Activated T-helper 2 cell treated with anti-CD3 and anti-CD28 coated beads, Interferon-gamma antibody, Interleukin-2, Interleukin-4, amounts not matched to agents 10 μg/mL and 5 μg/mL and 100 μg/mL, durations not matched to agents 14 hours and 24 hours and 36 hours (primary cell): ENCODE measurements at regions of chr2 and their contacts with region 1.

Region 1: DNA sequence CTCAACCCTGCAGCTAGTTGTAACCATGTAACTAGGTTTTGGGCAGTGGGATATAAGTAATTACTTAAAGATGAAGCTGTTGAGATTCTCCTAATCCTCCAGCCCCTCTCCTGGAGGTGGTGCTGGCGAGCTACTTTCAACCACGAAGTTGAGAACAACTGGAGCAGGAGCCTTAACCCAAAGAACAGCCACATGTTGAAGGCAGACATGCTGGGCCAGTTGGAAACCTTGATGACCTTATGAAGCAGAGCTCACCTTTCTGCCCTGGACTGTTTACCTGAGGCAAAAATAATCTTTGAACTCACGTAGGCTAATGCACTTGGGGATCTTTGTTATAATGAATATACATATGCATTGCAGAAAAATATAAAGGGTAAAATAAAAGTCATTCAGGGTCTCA is 89.6 kb upstream of the NPAS2 start:
- DNase-seq: no peak
- H3K4me3 Mint-ChIP-seq: no peak overlapping the region
- H3K27ac Mint-ChIP-seq: no peak overlapping the region
- H3K4me1 Mint-ChIP-seq: no peaks in the 10 kb centered on the region
- H3K27me3 Mint-ChIP-seq: peaks cover 19% of the 10 kb centered on the region

Region 2: DNA sequence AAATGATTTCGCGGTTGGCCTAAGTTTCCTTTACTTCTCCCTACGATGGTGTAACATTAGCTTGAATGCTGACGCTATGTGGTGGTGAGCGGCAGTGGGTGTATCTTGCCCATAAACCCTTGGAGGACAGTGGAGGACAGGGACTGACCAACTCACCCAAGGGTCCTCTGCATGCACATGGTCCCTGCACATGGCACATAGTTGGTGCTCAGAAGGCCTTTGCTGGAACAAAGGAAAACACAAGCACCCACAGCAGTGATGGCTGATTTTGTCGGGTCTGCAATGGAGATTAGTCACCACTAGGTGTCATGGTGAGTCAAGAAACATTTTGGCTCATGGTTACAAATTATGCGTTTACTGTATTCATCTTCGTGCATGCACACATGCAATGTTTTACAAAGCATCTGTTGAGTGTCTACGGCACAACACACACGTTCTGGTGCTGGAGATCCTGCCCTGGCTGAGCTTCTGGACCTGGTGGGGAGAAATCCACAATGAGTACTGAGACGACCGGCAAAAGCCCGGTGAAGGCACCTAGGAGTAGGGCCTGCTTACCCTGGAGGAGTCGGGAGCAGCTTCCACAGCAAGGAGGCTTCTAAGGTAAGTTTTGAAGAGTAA is 123.5 kb before region 1 on chr2:
- intact Hi-C with region 1: loop called (anchors 10 kb)
- DNase-seq: peak; percentile 21
- H3K4me3 Mint-ChIP-seq: no peak overlapping the region
- H3K27ac Mint-ChIP-seq: no peak overlapping the region
- H3K4me1 Mint-ChIP-seq: peaks cover 9% of the 10 kb centered on the region
- H3K27me3 Mint-ChIP-seq: peaks cover 4% of the 10 kb centered on the region